ENCODE measurements at regions of chr12 and their contacts with region 1.

Region 1: GRCh38 chr12:90959538-90960139 is 4.7 kb upstream of the CCER1 start:
- DNase-seq: no peak
- ATAC-seq: no peak

Region 2: DNA sequence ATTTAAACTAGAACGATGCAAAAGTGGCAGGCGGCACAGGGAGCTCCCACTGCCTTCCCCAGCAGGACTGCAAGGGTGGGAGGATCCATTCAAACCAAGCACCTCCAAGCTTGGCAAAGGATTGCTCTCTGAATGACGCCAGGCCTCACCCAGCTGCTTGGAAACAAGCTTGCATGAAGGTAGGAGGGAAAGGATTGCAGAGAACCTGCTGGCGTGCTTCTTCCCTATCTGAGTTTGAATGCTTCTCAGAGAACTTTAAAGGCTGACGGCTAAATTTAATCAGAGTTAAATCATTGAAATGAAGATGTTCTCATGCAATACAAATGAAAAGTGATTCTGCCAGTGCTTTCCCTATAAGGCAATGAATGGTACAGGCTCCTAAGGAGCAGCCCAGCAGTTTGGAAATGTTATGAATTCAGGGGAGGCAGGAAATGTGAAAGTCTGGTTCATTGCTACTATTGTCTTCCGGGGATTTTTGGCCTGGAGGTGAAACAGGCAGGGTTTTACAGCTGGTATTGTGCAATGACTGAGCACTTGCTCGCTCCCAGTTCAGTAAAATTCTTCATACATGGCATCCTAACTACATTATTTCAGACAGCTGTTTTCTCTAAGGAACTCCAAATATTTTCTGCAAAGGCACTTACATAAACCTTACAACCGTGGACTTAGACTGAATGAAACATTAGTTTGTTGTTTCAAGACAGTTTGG is 1575.4 kb before region 1 on chr12:
- intact Hi-C with region 1: loop called (anchors 10 kb)
- DNase-seq: no peak
- ATAC-seq: peak; percentile 89